Aorta (tissue), 5 donors: ENCODE measurements at regions of chr1 and their contacts with region 1.

Region 1: DNA sequence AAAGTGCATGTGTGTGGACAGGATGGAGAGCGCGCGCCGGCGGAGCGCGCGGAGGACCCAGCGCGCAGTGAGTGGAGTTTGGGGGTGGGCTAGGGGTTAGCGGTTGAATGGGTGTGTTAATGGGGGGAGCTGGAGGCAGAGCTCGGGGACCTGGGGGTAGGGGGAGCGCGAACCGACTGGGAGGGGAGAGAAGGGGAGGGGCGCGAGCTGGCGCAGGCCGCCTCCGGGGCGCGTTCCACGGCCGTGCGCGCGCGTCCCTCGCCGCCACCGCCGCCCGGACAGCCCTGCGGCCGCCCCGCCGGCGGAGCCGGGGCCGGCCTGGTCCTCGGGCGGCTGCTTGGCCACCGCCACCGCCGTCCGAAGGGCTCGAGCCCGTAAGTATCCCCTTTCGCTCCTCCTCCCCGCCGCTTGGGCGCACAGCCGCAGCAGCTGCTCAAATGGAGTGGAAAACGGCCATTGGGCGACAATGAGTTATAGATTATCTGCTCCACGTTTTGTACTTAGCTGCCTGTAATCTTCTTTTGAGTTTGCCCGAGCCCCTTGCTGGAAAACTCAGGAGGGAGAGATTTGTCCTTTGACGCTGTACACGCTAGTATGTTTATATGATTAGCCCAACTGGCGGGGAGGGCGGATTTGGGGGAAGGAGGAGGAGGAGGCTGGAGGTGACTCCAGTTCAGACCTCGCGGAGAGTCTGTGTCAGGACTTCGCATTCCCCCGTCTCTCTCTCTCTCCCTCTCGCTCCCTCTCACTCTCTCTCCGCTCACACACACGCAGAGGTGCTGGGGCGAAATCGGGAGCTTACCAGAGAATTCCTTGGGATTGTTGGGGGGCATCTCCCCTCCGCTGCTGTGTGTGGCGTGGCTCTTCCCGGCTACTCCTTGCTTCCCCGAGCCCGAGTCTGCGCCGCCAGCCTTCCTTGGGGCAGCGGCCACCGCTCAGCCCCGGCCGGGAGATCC is at the start of gene ADGRL2:
- DNase-seq: peak; percentile 86 to 91
- ATAC-seq: peak; percentile 92
- H3K4me3 ChIP-seq: peak within 1 kb of the TSS; percentile 90 to 96
- H3K27ac ChIP-seq: peak within 1 kb of the TSS; percentile 91 to 97
- H3K4me1 ChIP-seq: no peaks in the 10 kb centered on the region
- H3K27me3 ChIP-seq: no peaks in the 10 kb centered on the region
- total RNA-seq, gene ADGRL2: 53.4 to 62.7 TPM

Region 2: GRCh38 chr1:81978945-81979344 is 178.0 kb after region 1 on chr1:
- intact Hi-C with region 1: loop called in 1 of 2 experiments (anchors 10 kb)
- DNase-seq: no peak
- ATAC-seq: no peak
- H3K4me3 ChIP-seq: no peak overlapping the region
- H3K27ac ChIP-seq: no peak overlapping the region
- H3K4me1 ChIP-seq: peaks cover 0 to 4% of the 10 kb centered on the region in 2 donors
- H3K27me3 ChIP-seq: no peaks in the 10 kb centered on the region

Region 3: DNA sequence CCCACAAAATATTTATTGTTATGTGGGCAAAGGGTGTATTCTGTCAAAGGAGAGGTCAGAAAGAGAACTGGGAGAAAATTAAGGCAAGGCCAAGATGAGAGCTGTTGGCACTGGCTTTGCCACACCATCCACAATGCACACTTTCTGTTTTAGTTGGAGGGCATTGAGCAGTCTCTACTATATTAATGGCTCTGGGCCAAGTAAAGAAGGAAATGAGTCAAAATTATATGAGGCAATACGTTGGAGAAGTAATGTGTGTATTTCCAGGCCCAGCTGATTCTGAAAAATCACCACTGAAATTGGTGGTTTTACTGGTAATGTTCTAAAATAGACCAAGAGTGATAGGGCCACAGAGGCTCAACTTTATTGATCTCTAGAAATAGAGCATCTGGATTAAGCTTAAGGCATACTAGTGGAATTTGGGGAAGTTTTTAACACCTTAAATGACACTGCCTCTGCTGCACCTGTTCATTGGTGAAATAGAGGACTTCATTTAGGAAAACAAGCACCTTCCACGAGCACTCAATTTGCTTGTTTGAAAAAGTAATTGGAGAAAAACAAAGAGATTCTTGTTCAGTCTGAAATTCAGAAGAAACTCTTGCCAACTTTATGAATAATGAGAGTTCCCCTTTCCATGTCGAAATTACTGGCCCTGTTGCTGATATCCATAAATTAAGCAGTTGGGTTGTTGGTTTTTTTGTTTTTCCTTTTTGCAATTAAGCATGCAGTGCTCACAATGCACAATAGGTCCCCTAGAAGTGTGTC is 424.6 kb after region 1 on chr1:
- intact Hi-C with region 1: loop called in 1 of 2 experiments (anchors 10 kb)
- DNase-seq: peak in 1 of 2 donors; percentile 43
- ATAC-seq: peak; percentile 80
- H3K4me3 ChIP-seq: no peak overlapping the region
- H3K27ac ChIP-seq: peak overlapping the region in 1 of 2 donors; percentile 70
- H3K4me1 ChIP-seq: peaks cover 0 to 1% of the 10 kb centered on the region in 2 donors
- H3K27me3 ChIP-seq: no peaks in the 10 kb centered on the region

Region 4: GRCh38 chr1:82503822-82504221 is 702.8 kb after region 1 on chr1:
- intact Hi-C with region 1: loop called in 1 of 2 experiments (anchors 5 kb)
- DNase-seq: no peak
- ATAC-seq: no peak
- H3K4me3 ChIP-seq: peak overlapping the region; percentile 43 to 59
- H3K27ac ChIP-seq: peak overlapping the region in 1 of 2 donors; percentile 57
- H3K4me1 ChIP-seq: no peaks in the 10 kb centered on the region
- H3K27me3 ChIP-seq: no peaks in the 10 kb centered on the region